MCF 10A (cell line): ENCODE measurements at regions of chr6 and their contacts with region 1.

Region 1: GRCh38 chr6:27809939-27810767 is 102.0 kb downstream of the OR2B2 start:
- DNase-seq: peak; percentile 96
- H3K4me3 Mint-ChIP-seq: peak overlapping the region; percentile 86
- H3K27ac Mint-ChIP-seq: peak overlapping the region; percentile 94
- H3K4me1 Mint-ChIP-seq: peaks cover 20% of the 10 kb centered on the region
- H3K27me3 Mint-ChIP-seq: no peaks in the 10 kb centered on the region
- CTCF ChIP-seq: no peak

Region 2: GRCh38 chr6:26054857-26055669 is 1755.1 kb before region 1 on chr6:
- CTCF ChIA-PET with region 1: no interaction called
- POLR2A ChIA-PET with region 1: interaction called, 18 read pairs
- intact Hi-C with region 1: no loop called
- DNase-seq: peak; percentile 96
- H3K4me3 Mint-ChIP-seq: peak overlapping the region; percentile 74
- H3K27ac Mint-ChIP-seq: peak overlapping the region; percentile 92
- H3K4me1 Mint-ChIP-seq: no peaks in the 10 kb centered on the region
- H3K27me3 Mint-ChIP-seq: no peaks in the 10 kb centered on the region
- CTCF ChIP-seq: no peak

Region 3: DNA sequence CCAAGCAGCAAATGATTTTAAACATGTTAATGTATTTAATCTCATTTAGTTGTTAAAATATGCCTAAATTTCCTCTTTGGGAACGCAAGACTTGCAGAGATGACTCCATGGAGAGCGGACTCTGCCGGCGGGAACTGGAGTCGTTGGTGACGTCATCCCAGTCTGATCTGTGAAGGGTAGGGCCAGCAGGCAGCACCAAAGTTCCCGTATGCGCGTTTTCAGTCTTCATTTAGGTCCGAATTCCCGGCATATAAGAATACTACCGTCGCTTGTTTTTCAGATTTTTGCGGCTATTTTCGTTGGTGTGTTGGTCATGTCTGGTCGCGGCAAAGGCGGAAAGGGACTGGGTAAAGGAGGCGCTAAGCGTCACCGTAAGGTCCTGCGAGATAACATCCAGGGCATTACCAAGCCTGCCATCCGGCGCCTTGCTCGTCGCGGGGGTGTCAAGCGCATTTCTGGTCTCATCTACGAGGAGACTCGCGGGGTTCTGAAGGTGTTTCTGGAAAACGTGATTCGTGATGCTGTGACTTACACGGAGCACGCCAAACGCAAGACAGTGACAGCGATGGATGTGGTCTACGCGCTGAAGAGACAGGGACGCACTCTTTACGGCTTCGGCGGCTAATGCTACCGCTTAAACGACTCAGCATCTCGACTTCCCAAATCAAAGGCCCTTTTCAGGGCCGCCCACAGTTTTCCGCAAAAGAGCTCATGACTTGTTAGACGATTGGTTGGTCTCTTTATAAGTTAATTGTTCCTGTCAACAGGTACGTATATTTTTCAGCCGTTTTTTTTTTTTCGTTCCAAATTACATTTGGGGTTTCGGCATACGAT is 1605.6 kb before region 1 on chr6:
- CTCF ChIA-PET with region 1: no interaction called
- POLR2A ChIA-PET with region 1: interaction called, 179 read pairs
- intact Hi-C with region 1: no loop called
- DNase-seq: peak; percentile 98
- H3K4me3 Mint-ChIP-seq: no peak overlapping the region
- H3K27ac Mint-ChIP-seq: no peak overlapping the region
- H3K4me1 Mint-ChIP-seq: peaks cover 3% of the 10 kb centered on the region
- H3K27me3 Mint-ChIP-seq: no peaks in the 10 kb centered on the region
- CTCF ChIP-seq: no peak

Region 4: DNA sequence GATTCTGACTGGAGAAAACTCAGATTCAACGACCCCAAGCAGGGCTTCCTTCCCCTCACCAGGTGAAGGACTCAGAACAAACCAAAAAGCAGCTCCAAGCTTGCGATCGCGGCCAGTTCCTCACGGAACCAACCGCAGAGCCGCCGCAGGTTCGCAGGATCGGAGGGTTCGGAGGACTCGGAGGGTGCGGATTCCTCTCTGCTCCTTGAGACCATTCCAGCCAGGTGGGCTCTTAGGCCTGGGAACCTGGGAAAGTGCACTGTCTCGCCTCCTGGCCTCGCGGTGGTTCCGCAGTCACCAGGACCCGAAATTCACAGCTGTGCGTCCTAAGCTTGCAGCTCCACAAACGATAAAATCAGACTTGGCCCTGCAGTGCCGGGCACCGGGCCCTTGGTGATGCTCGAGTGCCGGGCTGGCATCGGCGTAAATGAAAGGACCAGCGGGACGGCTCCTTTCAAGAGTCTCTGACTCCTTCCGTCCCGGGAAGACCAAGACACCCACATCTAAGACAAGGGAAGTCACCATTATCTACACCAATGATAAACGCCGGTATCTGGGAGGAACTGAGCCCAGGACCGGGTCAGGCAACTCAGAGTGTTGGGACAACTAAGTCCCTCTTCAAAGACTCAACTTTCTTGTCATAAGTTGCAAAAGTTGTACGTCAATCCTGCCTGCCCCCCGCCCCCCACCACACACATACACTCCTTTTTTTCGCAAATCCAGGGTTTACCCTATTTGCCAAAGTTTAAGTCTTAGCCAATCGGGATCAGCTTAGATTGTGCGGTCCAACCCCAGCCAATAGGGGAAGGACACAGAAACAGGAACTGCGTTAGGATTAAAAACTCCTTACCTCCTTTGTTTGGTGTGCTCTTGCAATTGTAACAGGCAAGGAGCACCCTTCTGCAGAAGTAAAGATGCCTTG is 632.4 kb before region 1 on chr6:
- CTCF ChIA-PET with region 1: no interaction called
- POLR2A ChIA-PET with region 1: interaction called, 24 read pairs
- intact Hi-C with region 1: no loop called
- DNase-seq: peak; percentile 92
- H3K4me3 Mint-ChIP-seq: peak overlapping the region; percentile 87
- H3K27ac Mint-ChIP-seq: peak overlapping the region; percentile 92
- H3K4me1 Mint-ChIP-seq: no peaks in the 10 kb centered on the region
- H3K27me3 Mint-ChIP-seq: no peaks in the 10 kb centered on the region
- CTCF ChIP-seq: peak; percentile 36

Region 5: GRCh38 chr6:27669624-27670301 is 140.4 kb before region 1 on chr6:
- CTCF ChIA-PET with region 1: no interaction called
- POLR2A ChIA-PET with region 1: no interaction called
- intact Hi-C with region 1: no loop called
- DNase-seq: peak; percentile 25
- H3K4me3 Mint-ChIP-seq: peak overlapping the region; percentile 76
- H3K27ac Mint-ChIP-seq: no peak overlapping the region
- H3K4me1 Mint-ChIP-seq: peaks cover 12% of the 10 kb centered on the region
- H3K27me3 Mint-ChIP-seq: no peaks in the 10 kb centered on the region
- CTCF ChIP-seq: no peak

Region 6: GRCh38 chr6:27706431-27706830 is 103.7 kb before region 1 on chr6:
- CTCF ChIA-PET with region 1: no interaction called
- POLR2A ChIA-PET with region 1: no interaction called
- intact Hi-C with region 1: no loop called
- DNase-seq: no peak
- H3K4me3 Mint-ChIP-seq: no peak overlapping the region
- H3K27ac Mint-ChIP-seq: no peak overlapping the region
- H3K4me1 Mint-ChIP-seq: no peaks in the 10 kb centered on the region
- H3K27me3 Mint-ChIP-seq: no peaks in the 10 kb centered on the region
- CTCF ChIP-seq: no peak

Region 7: GRCh38 chr6:27838058-27838944 is 28.1 kb after region 1 on chr6:
- CTCF ChIA-PET with region 1: interaction called, 3 read pairs
- POLR2A ChIA-PET with region 1: interaction called, 690 read pairs
- intact Hi-C with region 1: no loop called
- DNase-seq: peak; percentile 98
- H3K4me3 Mint-ChIP-seq: no peak overlapping the region
- H3K27ac Mint-ChIP-seq: no peak overlapping the region
- H3K4me1 Mint-ChIP-seq: peaks cover 32% of the 10 kb centered on the region
- H3K27me3 Mint-ChIP-seq: no peaks in the 10 kb centered on the region
- CTCF ChIP-seq: no peak

Region 8: DNA sequence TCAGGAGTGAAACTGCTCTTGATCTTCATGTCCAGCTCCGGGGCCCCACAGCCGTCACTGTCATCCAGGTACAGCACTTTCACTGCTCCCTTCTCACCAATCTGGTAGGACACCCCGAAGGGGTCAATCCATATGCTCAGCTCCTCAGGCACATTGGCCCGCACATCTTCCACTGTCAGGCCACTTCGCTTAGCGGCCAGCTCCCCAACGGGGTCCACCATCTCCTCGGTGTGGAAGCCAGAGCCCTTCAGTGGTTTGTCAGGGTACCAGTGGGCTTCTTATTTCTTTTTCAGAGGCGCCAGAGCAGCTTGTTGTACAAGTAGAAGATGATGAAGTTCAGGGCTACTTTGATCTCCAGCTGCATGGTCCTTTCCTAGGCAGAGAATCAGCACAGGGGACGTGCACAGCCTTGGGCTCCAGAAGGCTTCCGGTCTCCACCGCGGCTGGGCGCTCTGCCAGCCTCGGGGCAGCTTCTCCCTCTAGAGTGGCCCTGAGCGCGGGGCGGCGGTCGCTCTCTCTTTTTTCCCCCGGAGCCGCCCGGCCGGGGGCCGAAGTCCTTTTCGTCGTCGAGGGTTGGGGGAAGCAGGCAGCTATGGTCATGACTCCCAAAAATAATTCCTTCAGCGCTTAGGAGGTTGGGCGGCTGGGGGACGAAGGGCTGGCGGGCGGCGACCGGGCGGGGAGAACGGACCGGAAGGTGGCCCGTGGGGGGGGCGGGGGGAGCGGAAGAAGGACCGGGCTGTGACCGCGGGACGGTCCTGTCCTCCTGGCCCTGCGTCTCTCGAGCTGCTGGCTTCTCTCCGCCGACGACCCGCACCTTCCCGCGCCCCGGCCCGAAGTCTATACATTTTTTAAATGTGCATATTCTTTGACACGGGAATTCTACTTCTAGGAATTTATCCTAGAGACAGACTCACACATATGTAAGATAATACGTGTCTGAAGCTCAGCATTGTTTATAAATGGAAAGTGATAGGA is 408.4 kb after region 1 on chr6:
- CTCF ChIA-PET with region 1: no interaction called
- POLR2A ChIA-PET with region 1: no interaction called
- intact Hi-C with region 1: loop called (anchors 10 kb)
- DNase-seq: peak; percentile 58
- H3K4me3 Mint-ChIP-seq: peak overlapping the region; percentile 78
- H3K27ac Mint-ChIP-seq: peak overlapping the region; percentile 76
- H3K4me1 Mint-ChIP-seq: peaks cover 6% of the 10 kb centered on the region
- H3K27me3 Mint-ChIP-seq: no peaks in the 10 kb centered on the region
- CTCF ChIP-seq: no peak